MCF 10A (cell line): ENCODE measurements at regions of chr11 and their contacts with region 1.

Region 1: GRCh38 chr11:100681064-100681502 is 6.0 kb upstream of the ARHGAP42 start:
- DNase-seq: peak; percentile 30
- H3K4me3 Mint-ChIP-seq: no peak overlapping the region
- H3K27ac Mint-ChIP-seq: peak overlapping the region; percentile 61
- H3K4me1 Mint-ChIP-seq: peaks cover 7% of the 10 kb centered on the region
- H3K27me3 Mint-ChIP-seq: no peaks in the 10 kb centered on the region
- CTCF ChIP-seq: no peak

Region 2: GRCh38 chr11:100340416-100341323 is 340.4 kb before region 1 on chr11:
- CTCF ChIA-PET with region 1: no interaction called
- POLR2A ChIA-PET with region 1: no interaction called
- intact Hi-C with region 1: no loop called
- DNase-seq: no peak
- H3K4me3 Mint-ChIP-seq: no peak overlapping the region
- H3K27ac Mint-ChIP-seq: no peak overlapping the region
- H3K4me1 Mint-ChIP-seq: no peaks in the 10 kb centered on the region
- H3K27me3 Mint-ChIP-seq: peaks cover 20% of the 10 kb centered on the region
- CTCF ChIP-seq: no peak

Region 3: GRCh38 chr11:100575870-100576705 is 105.0 kb before region 1 on chr11:
- CTCF ChIA-PET with region 1: interaction called, 20 read pairs
- POLR2A ChIA-PET with region 1: no interaction called
- intact Hi-C with region 1: loop called (anchors 2 kb)
- DNase-seq: peak; percentile 63
- H3K4me3 Mint-ChIP-seq: no peak overlapping the region
- H3K27ac Mint-ChIP-seq: no peak overlapping the region
- H3K4me1 Mint-ChIP-seq: no peaks in the 10 kb centered on the region
- H3K27me3 Mint-ChIP-seq: peaks cover 22% of the 10 kb centered on the region
- CTCF ChIP-seq: peak; percentile 66

Region 4: GRCh38 chr11:100827934-100828661 is 147.0 kb after region 1 on chr11:
- CTCF ChIA-PET with region 1: interaction called, 32 read pairs
- POLR2A ChIA-PET with region 1: interaction called, 3 read pairs
- intact Hi-C with region 1: no loop called
- DNase-seq: peak; percentile 34
- H3K4me3 Mint-ChIP-seq: no peak overlapping the region
- H3K27ac Mint-ChIP-seq: no peak overlapping the region
- H3K4me1 Mint-ChIP-seq: peaks cover 19% of the 10 kb centered on the region
- H3K27me3 Mint-ChIP-seq: no peaks in the 10 kb centered on the region
- CTCF ChIP-seq: no peak

Region 5: GRCh38 chr11:100849009-100849900 is 168.2 kb after region 1 on chr11:
- CTCF ChIA-PET with region 1: interaction called, 61 read pairs
- POLR2A ChIA-PET with region 1: no interaction called
- intact Hi-C with region 1: no loop called
- DNase-seq: no peak
- H3K4me3 Mint-ChIP-seq: no peak overlapping the region
- H3K27ac Mint-ChIP-seq: no peak overlapping the region
- H3K4me1 Mint-ChIP-seq: no peaks in the 10 kb centered on the region
- H3K27me3 Mint-ChIP-seq: no peaks in the 10 kb centered on the region
- CTCF ChIP-seq: no peak

Region 6: DNA sequence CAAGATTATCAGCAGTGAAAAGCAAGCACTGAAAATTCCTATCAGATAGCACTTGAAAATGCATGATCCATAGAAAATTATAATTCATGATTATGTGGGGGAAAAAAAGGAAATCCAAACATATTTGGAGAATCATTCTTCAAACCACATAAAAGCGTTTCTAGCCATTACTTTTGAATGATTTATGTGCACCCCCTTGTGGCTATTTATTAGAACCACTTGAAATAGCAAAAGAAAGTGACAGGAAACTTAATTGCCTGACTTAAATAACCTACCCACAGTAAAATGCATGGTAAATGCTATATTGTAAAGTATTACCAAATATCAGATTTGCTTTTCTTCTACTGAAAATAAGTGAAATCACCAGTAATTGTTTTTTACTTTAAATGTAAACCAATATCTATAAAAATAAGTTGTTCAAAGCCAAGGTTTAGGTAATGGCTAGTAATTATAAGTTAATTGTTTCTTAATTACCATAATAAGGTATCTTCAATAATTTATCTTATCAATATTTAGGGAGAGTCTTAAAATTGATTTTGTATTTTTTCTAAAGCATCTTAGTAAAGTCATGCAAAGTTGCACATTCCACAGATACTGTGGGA is 174.5 kb after region 1 on chr11:
- CTCF ChIA-PET with region 1: interaction called, 61 read pairs
- POLR2A ChIA-PET with region 1: interaction called, 3 read pairs
- intact Hi-C with region 1: loop called (anchors 1 kb)
- DNase-seq: peak; percentile 64
- H3K4me3 Mint-ChIP-seq: no peak overlapping the region
- H3K27ac Mint-ChIP-seq: no peak overlapping the region
- H3K4me1 Mint-ChIP-seq: no peaks in the 10 kb centered on the region
- H3K27me3 Mint-ChIP-seq: no peaks in the 10 kb centered on the region
- CTCF ChIP-seq: peak; percentile 57

Region 7: DNA sequence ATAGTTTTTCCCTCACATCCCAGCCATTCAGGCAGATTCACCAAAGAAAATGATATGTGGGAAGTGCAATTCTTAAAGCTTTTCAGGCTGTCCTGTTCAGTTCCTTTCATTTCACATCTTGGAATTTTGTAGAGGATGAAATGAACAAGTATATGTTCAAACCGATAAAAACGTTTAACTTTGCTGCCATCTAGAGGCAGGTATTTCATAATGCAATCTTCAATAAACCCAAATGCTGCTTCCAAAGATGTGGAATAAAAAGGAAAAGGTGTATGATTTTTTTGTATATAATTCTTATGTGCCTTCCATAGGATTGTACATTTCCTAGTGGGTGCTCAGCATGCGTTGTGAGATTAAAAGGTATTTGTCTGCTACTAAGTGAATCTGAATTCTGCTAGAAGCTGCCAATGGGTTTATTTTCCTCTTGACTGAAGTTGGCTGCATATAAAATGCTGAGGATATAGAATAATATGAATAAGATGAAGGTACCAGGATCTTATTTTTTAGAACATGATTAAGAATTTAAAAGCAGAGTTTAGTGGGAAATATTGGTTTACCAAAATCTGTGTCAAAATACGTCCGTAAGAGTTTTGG is 249.2 kb after region 1 on chr11:
- CTCF ChIA-PET with region 1: interaction called, 17 read pairs
- POLR2A ChIA-PET with region 1: no interaction called
- intact Hi-C with region 1: loop called (anchors 2 kb)
- DNase-seq: peak; percentile 68
- H3K4me3 Mint-ChIP-seq: no peak overlapping the region
- H3K27ac Mint-ChIP-seq: no peak overlapping the region
- H3K4me1 Mint-ChIP-seq: no peaks in the 10 kb centered on the region
- H3K27me3 Mint-ChIP-seq: no peaks in the 10 kb centered on the region
- CTCF ChIP-seq: peak; percentile 73

Region 8: DNA sequence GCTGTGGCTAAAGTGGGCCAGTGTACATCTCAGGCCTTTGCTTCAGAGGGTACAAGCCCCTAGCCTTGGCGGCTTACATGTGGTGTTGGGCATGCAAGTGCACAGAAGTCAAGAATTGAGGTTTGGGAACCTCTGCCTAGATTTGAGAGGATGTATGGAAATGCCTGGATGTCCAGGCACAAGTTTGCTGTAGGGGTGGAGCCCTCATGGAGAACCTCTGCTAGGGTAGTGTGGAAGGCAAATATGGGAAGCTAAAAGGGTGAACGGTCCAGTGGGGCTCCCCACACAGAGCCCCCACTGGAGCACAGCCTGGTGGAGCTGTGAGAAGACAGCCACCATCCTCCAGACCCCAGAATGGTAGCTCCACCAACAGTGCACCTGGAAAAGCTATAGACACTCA is 477.0 kb after region 1 on chr11:
- CTCF ChIA-PET with region 1: no interaction called
- POLR2A ChIA-PET with region 1: no interaction called
- intact Hi-C with region 1: no loop called
- DNase-seq: no peak
- H3K4me3 Mint-ChIP-seq: no peak overlapping the region
- H3K27ac Mint-ChIP-seq: no peak overlapping the region
- H3K4me1 Mint-ChIP-seq: no peaks in the 10 kb centered on the region
- H3K27me3 Mint-ChIP-seq: no peaks in the 10 kb centered on the region
- CTCF ChIP-seq: no peak